Natural killer cell (primary cell): ENCODE measurements at regions of chr10 and their contacts with region 1.

Region 1: GRCh38 chr10:14954001-14954770 is at the start of gene DCLRE1C:
- DNase-seq: peak; percentile 88 to 92
- ATAC-seq: peak; percentile 90 to 97 (median 96)
- H3K4me3 ChIP-seq: peak within 1 kb of the TSS; percentile 86
- H3K4me3 Mint-ChIP-seq: peak within 1 kb of the TSS; percentile 97
- H3K27ac ChIP-seq: peak within 1 kb of the TSS; percentile 93
- H3K27ac Mint-ChIP-seq: peak within 1 kb of the TSS; percentile 94 to 95
- H3K4me1 ChIP-seq: peaks cover 34% of the 10 kb centered on the region
- H3K4me1 Mint-ChIP-seq: peaks cover 49 to 50% of the 10 kb centered on the region in 2 donors
- H3K27me3 ChIP-seq: no peaks in the 10 kb centered on the region
- H3K27me3 Mint-ChIP-seq: no peaks in the 10 kb centered on the region
- CTCF ChIP-seq: no peak
- total RNA-seq, gene DCLRE1C: 21.7 to 31.3 (median 22.3) TPM

Region 2: DNA sequence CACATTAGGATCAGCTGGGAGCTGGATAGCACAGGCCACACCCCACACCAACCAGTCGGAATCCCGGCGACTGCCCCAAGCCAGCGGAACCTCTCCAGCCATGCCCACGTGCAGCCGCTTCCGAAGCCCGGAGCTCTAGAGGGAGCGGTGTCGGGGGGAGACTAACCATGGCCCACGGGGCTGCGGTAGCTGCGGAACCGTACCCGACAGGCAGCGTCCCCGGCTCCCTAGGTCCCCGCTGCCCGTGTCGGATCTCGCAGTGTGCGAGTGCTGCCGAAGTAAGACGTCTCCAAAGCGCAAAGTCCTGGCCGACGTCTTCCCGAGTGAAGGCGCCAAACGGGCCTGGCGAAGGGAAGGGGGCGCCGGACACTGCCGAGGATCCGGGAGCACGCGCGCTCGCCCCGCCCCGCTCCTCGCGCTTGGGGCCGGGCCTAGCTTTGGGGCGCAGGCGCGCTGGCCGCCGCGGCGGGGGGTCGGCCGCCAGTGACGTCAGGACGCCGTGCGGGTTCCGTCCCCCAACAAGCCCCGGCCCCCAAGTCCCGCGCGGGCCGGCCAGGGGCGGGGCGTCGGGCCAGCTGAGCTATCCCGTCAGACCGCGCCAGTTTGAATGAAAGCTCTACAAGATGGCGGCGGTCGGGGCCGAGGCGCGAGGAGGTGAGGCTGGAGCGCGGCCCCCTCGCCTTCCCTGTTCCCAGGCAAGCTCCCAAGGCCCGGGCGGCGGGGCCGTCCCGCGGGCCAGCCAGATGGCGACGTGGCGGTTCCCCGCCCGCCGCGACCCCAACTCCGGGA is 75.7 kb before region 1 on chr10 and contains the start of gene SUV39H2:
- intact Hi-C with region 1: loop called (anchors 5 kb)
- DNase-seq: peak; percentile 92 to 95
- ATAC-seq: peak; percentile 91 to 98 (median 94)
- H3K4me3 ChIP-seq: peak within 1 kb of the TSS; percentile 92
- H3K4me3 Mint-ChIP-seq: peak within 1 kb of the TSS; percentile 92
- H3K27ac ChIP-seq: peak within 1 kb of the TSS; percentile 59
- H3K27ac Mint-ChIP-seq: peak within 1 kb of the TSS; percentile 77 to 88
- H3K4me1 ChIP-seq: peaks cover 15% of the 10 kb centered on the region
- H3K4me1 Mint-ChIP-seq: peaks cover 26 to 28% of the 10 kb centered on the region in 2 donors
- H3K27me3 ChIP-seq: no peaks in the 10 kb centered on the region
- H3K27me3 Mint-ChIP-seq: no peaks in the 10 kb centered on the region
- CTCF ChIP-seq: no peak
- total RNA-seq, gene SUV39H2: 3.8 to 5.4 (median 5.2) TPM